ENCODE measurements at regions of chr2 and their contacts with region 1.

Region 1: DNA sequence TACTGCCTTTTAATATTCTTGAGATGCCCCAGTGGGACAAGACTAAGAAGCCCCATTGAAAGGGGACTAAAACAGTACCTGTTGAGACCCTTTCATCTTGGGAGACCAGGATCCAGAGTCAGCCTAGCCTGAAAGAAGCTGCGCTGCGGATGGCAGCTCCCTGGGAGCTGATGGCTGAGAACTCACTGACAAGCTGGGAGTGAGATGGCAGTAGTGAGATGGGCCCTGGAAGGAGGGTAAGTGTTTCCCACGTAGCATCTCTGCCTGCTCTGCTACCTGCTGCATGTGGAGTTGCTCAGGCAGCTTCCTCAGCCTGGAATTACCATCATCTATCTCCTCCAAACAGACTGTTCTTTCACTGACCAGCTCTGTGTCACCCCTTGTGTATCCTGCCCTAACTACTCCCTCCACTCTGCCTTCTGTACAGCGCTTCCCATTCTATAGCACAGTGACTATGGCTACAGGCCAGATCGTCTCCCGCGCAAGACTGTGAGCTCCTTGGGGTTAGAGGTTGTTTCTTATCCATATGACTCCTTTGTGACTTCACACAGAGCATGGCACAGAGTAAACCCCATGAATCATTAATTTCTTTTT is 330.4 kb downstream of the NBAS start:
- DNase-seq: no peak
- H3K4me3 ChIP-seq: no peak overlapping the region
- H3K27ac ChIP-seq: no peak overlapping the region
- H3K4me1 ChIP-seq: peaks cover 0 to 5% (median 0%) of the 10 kb centered on the region in 4 experiments
- H3K27me3 ChIP-seq: no peaks in the 10 kb centered on the region

Region 2: DNA sequence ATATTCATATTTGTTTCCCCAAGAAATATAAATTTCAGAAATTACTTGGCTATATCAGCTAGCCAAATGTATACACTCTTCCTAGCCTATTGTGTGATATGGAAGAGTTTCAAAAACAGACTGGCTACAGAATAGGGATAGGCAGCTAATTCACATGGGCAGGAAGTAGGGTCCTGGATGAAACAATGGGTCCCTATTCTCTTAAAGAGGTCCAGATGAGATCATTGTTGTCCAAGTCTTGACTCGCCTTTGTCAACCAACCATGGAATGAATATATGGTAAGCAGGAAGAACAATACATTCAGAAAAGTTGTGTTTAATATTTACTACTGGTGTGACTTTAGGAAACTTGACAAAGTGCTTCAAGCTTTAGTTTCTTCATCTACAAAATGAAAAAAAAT is 10.5 kb after region 1 on chr2:
- CTCF ChIA-PET with region 1: no interaction called
- POLR2A ChIA-PET with region 1: interaction called, 14 read pairs
- DNase-seq: no peak
- H3K4me3 ChIP-seq: no peak overlapping the region
- H3K27ac ChIP-seq: no peak overlapping the region
- H3K4me1 ChIP-seq: peaks cover 0 to 6% (median 0%) of the 10 kb centered on the region in 4 experiments
- H3K27me3 ChIP-seq: no peaks in the 10 kb centered on the region

Measured in common myeloid progenitor, CD34-positive (primary cell).